ENCODE measurements at regions of chr1 and their contacts with region 1.

Region 1: GRCh38 chr1:20640183-20640597 is 6.9 kb downstream of the PINK1 start:
- DNase-seq: peak; percentile 58
- H3K4me3 ChIP-seq: no peak overlapping the region
- H3K27ac ChIP-seq: no peak overlapping the region
- H3K4me1 ChIP-seq: no peaks in the 10 kb centered on the region
- H3K27me3 ChIP-seq: no peaks in the 10 kb centered on the region
- CTCF ChIP-seq: peak; percentile 67 to 84
- POLR2A ChIP-seq: no peak

Region 2: GRCh38 chr1:20521960-20522861 is 118.0 kb before region 1 on chr1:
- CTCF ChIA-PET with region 1: interaction called, 7 read pairs
- POLR2A ChIA-PET with region 1: no interaction called
- dilution Hi-C with region 1: no loop called
- intact Hi-C with region 1: loop called (anchors 1 kb)
- DNase-seq: peak; percentile 83
- H3K4me3 ChIP-seq: no peak overlapping the region
- H3K27ac ChIP-seq: no peak overlapping the region
- H3K4me1 ChIP-seq: no peaks in the 10 kb centered on the region
- H3K27me3 ChIP-seq: peaks cover 3 to 6% of the 10 kb centered on the region in 2 experiments
- CTCF ChIP-seq: peak; percentile 76 to 88
- POLR2A ChIP-seq: no peak

Region 3: GRCh38 chr1:20666804-20667203 is 26.6 kb after region 1 on chr1:
- CTCF ChIA-PET with region 1: no interaction called
- POLR2A ChIA-PET with region 1: no interaction called
- dilution Hi-C with region 1: no loop called
- intact Hi-C with region 1: no loop called
- DNase-seq: peak; percentile 11
- H3K4me3 ChIP-seq: no peak overlapping the region
- H3K27ac ChIP-seq: no peak overlapping the region
- H3K4me1 ChIP-seq: peaks cover 6% of the 10 kb centered on the region
- H3K27me3 ChIP-seq: no peaks in the 10 kb centered on the region
- CTCF ChIP-seq: no peak
- POLR2A ChIP-seq: no peak

Region 4: GRCh38 chr1:20932437-20932977 is 292.3 kb after region 1 on chr1:
- CTCF ChIA-PET with region 1: no interaction called
- POLR2A ChIA-PET with region 1: no interaction called
- dilution Hi-C with region 1: no loop called
- intact Hi-C with region 1: no loop called
- DNase-seq: no peak
- H3K4me3 ChIP-seq: no peak overlapping the region
- H3K27ac ChIP-seq: no peak overlapping the region
- H3K4me1 ChIP-seq: no peaks in the 10 kb centered on the region
- H3K27me3 ChIP-seq: no peaks in the 10 kb centered on the region
- CTCF ChIP-seq: no peak
- POLR2A ChIP-seq: no peak

Measured in endothelial cell of umbilical vein (primary cell).